Naive thymus-derived CD4-positive, alpha-beta T cell (primary cell): ENCODE measurements at regions of chr13 and their contacts with region 1.

Region 1: DNA sequence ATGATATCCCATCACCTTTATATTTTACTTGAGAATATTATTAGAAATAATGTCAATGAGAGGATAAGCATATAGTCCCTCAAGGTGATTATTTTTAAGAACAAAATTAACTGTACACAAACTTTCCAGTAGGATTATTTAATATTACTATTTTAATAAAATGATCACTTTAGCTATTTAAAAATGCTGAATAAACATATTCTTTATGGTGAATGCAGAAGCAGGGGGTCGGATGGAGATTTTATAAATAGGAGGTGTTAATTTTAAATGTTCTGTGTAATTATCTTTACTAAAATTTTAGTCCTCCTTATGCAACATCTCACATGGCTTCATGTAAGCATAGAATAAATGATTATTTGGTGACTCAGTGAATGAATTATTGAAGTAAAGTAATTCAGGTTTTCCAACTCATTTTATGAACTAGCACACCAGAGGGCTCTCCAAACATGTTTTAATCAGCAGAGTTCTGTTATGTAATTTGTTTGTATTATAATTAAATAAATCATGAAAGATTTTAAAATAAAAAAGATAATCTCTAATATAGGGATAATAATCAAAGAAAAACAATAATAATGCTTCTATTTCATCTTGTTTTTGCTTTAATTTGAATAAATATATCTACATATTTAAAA is 1635.2 kb downstream of the EFNB2 start:
- DNase-seq: no peak
- ATAC-seq: no peak
- H3K4me3 ChIP-seq: no peak overlapping the region
- H3K4me3 Mint-ChIP-seq: no peak overlapping the region
- H3K27ac ChIP-seq: no peak overlapping the region
- H3K27ac Mint-ChIP-seq: no peak overlapping the region
- H3K4me1 ChIP-seq: no peaks in the 10 kb centered on the region
- H3K4me1 Mint-ChIP-seq: no peaks in the 10 kb centered on the region
- H3K27me3 ChIP-seq: no peaks in the 10 kb centered on the region
- H3K27me3 Mint-ChIP-seq: no peaks in the 10 kb centered on the region

Region 2: DNA sequence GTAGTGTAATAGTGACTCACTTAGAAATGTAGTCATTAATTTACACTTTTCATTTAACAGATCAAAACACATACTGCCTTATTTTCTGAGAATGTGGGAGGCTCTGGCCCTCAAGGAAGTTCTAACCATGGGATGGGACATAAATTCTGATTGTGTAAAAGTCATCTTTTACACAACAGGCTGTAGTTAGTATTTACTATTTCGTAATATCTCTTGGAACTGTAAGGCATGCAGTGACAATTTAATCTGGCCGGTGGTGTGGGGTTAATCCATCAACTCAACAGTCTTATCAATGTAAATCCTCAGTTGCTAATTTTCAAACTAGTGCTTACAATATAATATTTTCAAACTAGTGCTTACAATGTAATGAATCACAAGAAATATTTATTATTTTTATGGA is 36.0 kb after region 1 on chr13:
- CTCF ChIA-PET with region 1: no interaction called
- POLR2A ChIA-PET with region 1: no interaction called
- intact Hi-C with region 1: no loop called
- DNase-seq: no peak
- ATAC-seq: no peak
- H3K4me3 ChIP-seq: no peak overlapping the region
- H3K4me3 Mint-ChIP-seq: no peak overlapping the region
- H3K27ac ChIP-seq: no peak overlapping the region
- H3K27ac Mint-ChIP-seq: no peak overlapping the region
- H3K4me1 ChIP-seq: no peaks in the 10 kb centered on the region
- H3K4me1 Mint-ChIP-seq: peaks cover 0 to under 1% (median 0%) of the 10 kb centered on the region in 7 donors
- H3K27me3 ChIP-seq: no peaks in the 10 kb centered on the region
- H3K27me3 Mint-ChIP-seq: peaks cover 0 to 4% (median 0%) of the 10 kb centered on the region in 5 donors

Region 3: DNA sequence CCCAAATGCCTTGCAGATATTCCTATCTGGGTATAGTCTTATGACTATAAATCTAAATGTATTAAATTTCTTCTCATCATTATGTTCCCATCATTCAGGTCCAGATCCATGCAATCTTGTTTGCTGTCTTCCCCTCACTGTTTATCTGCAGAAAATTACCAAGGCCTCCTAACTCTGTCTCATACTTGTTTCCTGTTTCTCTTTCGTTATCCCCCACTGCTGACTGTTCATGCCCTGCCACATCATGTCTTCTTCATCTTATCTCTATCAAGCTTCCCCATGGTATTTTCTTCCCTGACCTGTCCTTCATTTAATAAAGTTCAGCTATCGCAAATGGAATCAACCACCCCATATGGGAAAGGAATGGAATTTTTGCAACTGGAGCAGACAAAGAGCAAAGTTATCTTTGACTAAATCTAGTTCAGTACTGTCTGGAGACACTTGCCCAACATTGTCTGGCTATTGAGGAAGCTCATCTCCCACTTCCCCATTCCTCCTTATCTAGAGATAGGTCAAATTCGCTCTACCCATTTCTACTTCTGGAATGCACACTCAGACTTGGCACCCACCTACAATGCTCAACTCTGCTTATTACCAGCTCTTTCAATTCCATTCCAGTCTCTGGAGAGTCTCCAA is 277.1 kb after region 1 on chr13:
- CTCF ChIA-PET with region 1: no interaction called
- POLR2A ChIA-PET with region 1: no interaction called
- intact Hi-C with region 1: no loop called
- DNase-seq: no peak
- ATAC-seq: peak; percentile 67
- H3K4me3 ChIP-seq: no peak overlapping the region
- H3K4me3 Mint-ChIP-seq: peak overlapping the region in 1 of 10 donors; percentile 2
- H3K27ac ChIP-seq: no peak overlapping the region
- H3K27ac Mint-ChIP-seq: peak overlapping the region in 1 of 9 donors; percentile 7
- H3K4me1 ChIP-seq: peaks cover 0 to 4% of the 10 kb centered on the region in 2 donors
- H3K4me1 Mint-ChIP-seq: peaks cover 0 to 9% (median 0%) of the 10 kb centered on the region in 7 donors
- H3K27me3 ChIP-seq: no peaks in the 10 kb centered on the region
- H3K27me3 Mint-ChIP-seq: peaks cover 0 to 3% (median 0%) of the 10 kb centered on the region in 5 donors

Region 4: DNA sequence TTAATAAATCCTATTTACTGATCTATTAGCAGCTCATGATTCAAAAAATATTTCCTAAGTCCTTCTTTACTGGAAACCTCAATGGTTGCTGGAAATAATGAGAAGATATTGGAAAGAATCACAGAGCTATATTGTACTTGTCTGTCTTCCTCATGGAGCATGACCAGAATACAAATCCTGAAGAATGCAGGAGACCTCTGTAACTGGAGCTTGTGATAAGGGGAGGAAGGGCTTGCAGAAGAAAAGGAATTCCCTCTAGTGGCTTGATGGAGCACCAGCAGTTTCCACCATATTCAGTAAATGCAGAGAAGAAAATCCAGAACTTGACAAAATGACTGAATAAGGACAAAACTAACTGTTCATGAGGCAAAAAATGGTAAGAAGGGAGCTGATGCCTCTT is 302.1 kb after region 1 on chr13:
- CTCF ChIA-PET with region 1: no interaction called
- POLR2A ChIA-PET with region 1: no interaction called
- intact Hi-C with region 1: loop called in 1 of 2 experiments (anchors 2 kb)
- DNase-seq: peak in 2 of 9 donors; percentile 1 to 19
- ATAC-seq: no peak
- H3K4me3 ChIP-seq: no peak overlapping the region
- H3K4me3 Mint-ChIP-seq: no peak overlapping the region
- H3K27ac ChIP-seq: no peak overlapping the region
- H3K27ac Mint-ChIP-seq: no peak overlapping the region
- H3K4me1 ChIP-seq: no peaks in the 10 kb centered on the region
- H3K4me1 Mint-ChIP-seq: no peaks in the 10 kb centered on the region
- H3K27me3 ChIP-seq: no peaks in the 10 kb centered on the region
- H3K27me3 Mint-ChIP-seq: peaks cover 0 to 27% (median 11%) of the 10 kb centered on the region in 5 donors

Region 5: DNA sequence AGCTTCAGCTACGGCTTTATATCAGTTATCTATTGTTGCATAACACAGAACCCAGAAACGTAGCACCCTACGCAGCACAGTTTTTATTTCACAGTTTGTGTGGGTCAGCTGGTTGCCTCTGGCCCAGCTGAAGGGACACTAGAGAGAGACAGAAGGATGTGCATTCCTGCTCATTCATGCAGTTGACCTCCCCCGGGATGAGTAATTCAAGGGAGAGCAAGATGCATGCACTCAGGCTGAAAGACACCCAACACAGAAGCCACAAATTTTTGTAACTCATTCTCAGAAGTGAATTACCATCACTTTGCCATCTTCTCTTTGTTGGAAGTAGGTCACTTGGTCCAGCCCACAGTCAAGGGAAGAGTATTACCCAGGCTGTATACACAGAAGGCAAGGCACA is 1545.7 kb after region 1 on chr13:
- CTCF ChIA-PET with region 1: no interaction called
- POLR2A ChIA-PET with region 1: no interaction called
- intact Hi-C with region 1: no loop called
- DNase-seq: no peak
- ATAC-seq: no peak
- H3K4me3 ChIP-seq: no peak overlapping the region
- H3K4me3 Mint-ChIP-seq: no peak overlapping the region
- H3K27ac ChIP-seq: no peak overlapping the region
- H3K27ac Mint-ChIP-seq: no peak overlapping the region
- H3K4me1 ChIP-seq: no peaks in the 10 kb centered on the region
- H3K4me1 Mint-ChIP-seq: no peaks in the 10 kb centered on the region
- H3K27me3 ChIP-seq: no peaks in the 10 kb centered on the region
- H3K27me3 Mint-ChIP-seq: peaks cover 0 to 34% (median 10%) of the 10 kb centered on the region in 5 donors